WTC11 (cell line): ENCODE measurements at regions of chr1 and their contacts with region 1.

Region 1: DNA sequence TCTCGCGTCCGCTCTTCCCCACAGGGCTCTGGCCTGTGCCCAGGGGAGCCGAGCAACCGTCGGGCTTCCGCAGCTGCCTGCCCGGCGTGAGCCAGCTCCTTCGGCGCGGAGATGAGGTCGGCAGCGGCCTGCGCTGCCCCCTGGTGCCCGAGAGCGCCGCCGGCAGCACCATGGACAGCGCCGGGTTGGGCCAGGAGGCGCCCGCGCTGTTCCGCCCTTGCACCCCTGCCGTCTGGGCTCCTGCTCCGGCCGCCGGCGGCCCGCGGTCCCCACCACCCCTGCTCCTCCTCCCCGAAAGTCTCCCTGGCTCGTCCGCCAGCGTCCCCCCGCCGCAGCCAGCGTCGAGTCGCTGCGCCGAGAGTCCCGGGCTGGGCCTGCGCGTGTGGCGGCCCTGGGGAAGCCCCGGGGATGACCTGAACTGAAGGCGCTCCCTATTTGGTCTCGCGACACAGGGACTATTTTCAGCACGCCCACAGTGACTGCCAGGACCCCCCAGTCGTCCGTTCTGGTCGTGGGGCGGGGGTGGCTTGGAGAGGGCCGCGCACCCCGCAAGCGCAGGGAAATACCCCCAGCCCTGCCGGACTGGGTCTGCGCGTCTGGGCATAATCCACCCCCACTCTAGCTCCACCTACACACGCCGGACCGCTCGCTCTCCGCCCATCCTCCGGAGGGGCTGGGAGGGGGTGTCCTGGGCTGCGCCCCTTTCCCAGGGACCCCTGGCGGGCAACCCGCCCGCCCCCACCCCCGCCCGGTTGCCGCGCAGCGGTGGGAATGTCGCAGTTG is 1.3 kb downstream of the HES3 start:
- DNase-seq: peak; percentile 89
- ATAC-seq: peak; percentile 7
- H3K4me3 Mint-ChIP-seq: peak overlapping the region; percentile 81
- H3K27ac Mint-ChIP-seq: no peak overlapping the region
- H3K4me1 Mint-ChIP-seq: peaks cover 33% of the 10 kb centered on the region
- H3K27me3 Mint-ChIP-seq: peaks cover 38% of the 10 kb centered on the region
- CTCF ChIP-seq: peak; percentile 39; the same call in 1 of the 2 replicates

Region 2: GRCh38 chr1:6205849-6206519 is 39.3 kb before region 1 on chr1 and contains the start of gene RNF207:
- CTCF ChIA-PET with region 1: interaction called, 489 read pairs
- POLR2A ChIA-PET with region 1: interaction called, 8 read pairs
- DNase-seq: peak; percentile 83
- ATAC-seq: peak; percentile 60
- H3K4me3 Mint-ChIP-seq: peak within 1 kb of the TSS; percentile 61
- H3K27ac Mint-ChIP-seq: 0 out of 2 replicates have a peak within 1 kb of the TSS, but pooled peaks have one; percentile 45
- H3K4me1 Mint-ChIP-seq: peaks cover 24% of the 10 kb centered on the region
- H3K27me3 Mint-ChIP-seq: peaks cover 29% of the 10 kb centered on the region
- CTCF ChIP-seq: no peak
- total RNA-seq, gene RNF207: 9.2 to 14.0 TPM (median 12.9 TPM) in 3 replicates

Region 3: DNA sequence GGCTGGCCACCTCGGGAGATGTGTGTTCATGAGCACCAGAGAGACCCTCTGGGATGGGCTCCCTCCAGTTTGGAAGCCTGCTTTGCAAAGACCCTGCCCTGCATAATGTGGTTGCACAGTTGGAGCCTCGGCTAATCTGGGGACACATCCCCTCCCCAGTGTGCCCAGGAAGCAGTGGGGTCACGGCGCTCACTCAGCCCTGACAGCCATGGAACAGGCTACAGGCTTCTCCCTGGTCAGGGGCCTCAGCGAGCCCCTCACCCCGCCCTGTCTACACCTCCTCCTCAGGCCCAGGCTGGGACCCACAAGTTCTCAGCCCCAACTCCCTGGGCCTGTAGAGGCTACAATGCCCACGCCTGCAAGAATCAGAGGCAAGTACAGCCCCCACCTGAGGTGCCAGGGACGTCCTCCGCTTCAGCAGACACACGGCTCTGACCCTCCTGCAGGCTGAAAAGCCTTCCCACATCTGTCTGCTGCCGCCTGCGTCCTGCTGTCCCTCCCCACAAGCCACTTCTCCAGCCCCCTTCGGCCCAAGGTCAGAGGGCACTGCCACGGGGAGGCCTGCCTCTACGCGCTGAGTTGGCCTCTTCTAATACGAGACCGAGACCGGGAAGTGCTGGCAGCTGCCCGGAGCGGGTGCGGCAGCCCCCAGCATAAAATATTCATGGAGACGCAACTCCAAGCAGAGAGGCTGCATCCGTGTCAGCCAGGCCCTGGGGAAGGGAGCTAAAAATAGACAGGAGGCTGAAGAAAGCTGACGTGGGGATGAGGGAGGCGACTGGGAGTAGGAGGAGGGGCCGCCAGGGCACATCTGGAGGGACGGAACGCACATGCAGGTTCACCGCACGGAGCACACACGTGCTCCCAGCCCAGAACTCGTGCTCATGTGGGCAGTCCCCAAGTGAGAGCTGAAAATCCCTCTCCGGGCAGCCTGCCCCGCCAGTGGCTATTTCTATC is 30.8 kb after region 1 on chr1:
- CTCF ChIA-PET with region 1: interaction called, 14 read pairs
- POLR2A ChIA-PET with region 1: interaction called, 6 read pairs
- DNase-seq: no peak
- ATAC-seq: no peak
- H3K4me3 Mint-ChIP-seq: no peak overlapping the region
- H3K27ac Mint-ChIP-seq: peak overlapping the region; percentile 83
- H3K4me1 Mint-ChIP-seq: peaks cover 24% of the 10 kb centered on the region
- H3K27me3 Mint-ChIP-seq: no peaks in the 10 kb centered on the region
- CTCF ChIP-seq: no peak

Region 4: DNA sequence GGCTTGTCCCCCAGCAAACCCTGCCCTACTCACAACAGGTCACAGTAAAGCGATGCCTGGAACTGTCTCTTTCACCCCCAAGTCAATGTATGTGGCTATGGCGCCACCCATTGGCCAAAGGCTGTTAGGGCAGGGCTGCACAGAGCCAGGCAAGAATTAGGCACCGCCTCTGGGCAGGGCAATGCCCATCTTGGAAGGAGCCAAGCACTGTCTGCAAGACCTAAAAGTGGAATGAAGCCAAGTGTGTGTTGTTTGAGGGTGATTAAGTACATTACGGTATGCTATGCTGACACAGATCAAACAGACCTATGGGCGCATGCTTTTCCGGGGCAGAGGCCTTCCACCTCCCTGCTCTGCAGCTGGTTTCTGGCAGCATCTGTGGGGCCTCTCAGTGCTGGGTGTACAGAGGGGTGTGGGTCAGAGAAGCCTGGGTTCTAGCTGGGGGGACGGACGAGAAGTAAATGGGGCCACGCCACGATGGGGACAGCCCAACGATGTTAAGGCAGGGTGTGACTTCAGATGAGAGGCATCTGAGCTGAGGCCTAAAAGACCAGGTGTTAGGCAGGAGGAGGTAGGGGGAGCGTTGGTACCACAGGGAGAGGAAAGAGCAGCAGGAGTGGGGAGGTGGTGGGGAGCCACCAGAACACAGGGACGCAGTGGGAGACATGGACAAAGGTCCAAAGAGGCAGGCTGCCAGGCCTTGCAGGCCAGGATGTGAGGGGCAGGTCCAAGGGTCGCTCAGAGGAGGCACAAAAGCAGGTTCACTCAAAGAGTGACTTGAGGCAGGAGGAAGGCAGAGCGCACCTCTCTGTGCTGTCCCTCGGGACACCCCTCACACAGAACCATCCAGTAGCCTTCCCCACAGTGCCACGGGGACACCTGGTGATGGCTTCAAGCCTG is 98.5 kb after region 1 on chr1:
- CTCF ChIA-PET with region 1: interaction called, 112 read pairs
- POLR2A ChIA-PET with region 1: interaction called, 3 read pairs
- DNase-seq: peak; percentile 91
- ATAC-seq: peak; percentile 92
- H3K4me3 Mint-ChIP-seq: no peak overlapping the region
- H3K27ac Mint-ChIP-seq: peak overlapping the region; percentile 60
- H3K4me1 Mint-ChIP-seq: peaks cover 14% of the 10 kb centered on the region
- H3K27me3 Mint-ChIP-seq: no peaks in the 10 kb centered on the region
- CTCF ChIP-seq: peak; percentile 94

Region 5: GRCh38 chr1:6414443-6414844 is 169.2 kb after region 1 on chr1:
- CTCF ChIA-PET with region 1: interaction called, 119 read pairs
- POLR2A ChIA-PET with region 1: interaction called, 3 read pairs
- DNase-seq: peak; percentile 86
- ATAC-seq: peak; percentile 89
- H3K4me3 Mint-ChIP-seq: peak overlapping the region; percentile 47
- H3K27ac Mint-ChIP-seq: peak overlapping the region; percentile 95
- H3K4me1 Mint-ChIP-seq: peaks cover 20% of the 10 kb centered on the region
- H3K27me3 Mint-ChIP-seq: peaks cover 78% of the 10 kb centered on the region
- CTCF ChIP-seq: peak; percentile 62; the same call in 1 of the 2 replicates

Region 6: DNA sequence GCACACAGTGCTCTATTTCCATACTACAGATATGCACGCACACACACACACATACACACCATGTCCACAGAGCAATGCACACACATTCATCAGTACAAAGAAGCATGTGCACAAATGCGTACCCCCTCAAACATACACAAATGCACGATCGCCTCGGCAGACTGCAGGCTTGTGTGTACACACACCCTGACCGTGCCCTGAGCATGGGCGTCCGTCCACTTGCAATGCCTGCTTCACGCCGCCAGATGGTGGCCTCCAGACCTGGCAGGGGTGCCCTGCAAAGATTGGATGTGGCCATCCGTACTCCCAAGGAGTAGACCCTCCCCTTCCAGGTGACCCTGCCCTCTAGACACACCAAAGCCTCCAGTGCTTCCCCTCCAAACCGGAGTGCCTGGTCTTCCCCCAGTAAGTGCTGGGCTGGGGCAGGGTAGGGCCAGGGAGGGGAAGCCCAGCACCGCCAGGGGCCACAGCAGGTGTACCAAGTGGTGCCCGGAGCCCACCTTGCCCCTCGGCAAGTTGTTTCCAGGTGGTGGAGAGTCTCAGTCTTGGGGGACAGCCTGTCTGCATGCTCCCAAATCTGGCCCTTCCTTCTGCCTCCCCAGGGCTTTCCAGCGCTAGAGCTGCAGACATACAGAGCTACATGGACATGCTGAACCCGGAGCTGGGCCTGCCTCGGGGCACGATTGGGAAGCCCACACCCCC is 199.9 kb after region 1 on chr1:
- CTCF ChIA-PET with region 1: interaction called, 118 read pairs
- POLR2A ChIA-PET with region 1: no interaction called
- DNase-seq: peak; percentile 78
- ATAC-seq: peak; percentile 14
- H3K4me3 Mint-ChIP-seq: no peak overlapping the region
- H3K27ac Mint-ChIP-seq: peak overlapping the region; percentile 58
- H3K4me1 Mint-ChIP-seq: peaks cover 37% of the 10 kb centered on the region
- H3K27me3 Mint-ChIP-seq: peaks cover 17% of the 10 kb centered on the region
- CTCF ChIP-seq: peak; percentile 49; the same call in 1 of the 2 replicates